ENCODE measurements at regions of chr7 and their contacts with region 1.

Region 1: GRCh38 chr7:130205084-130205947 is at the start of gene TMEM209:
- DNase-seq: peak; percentile 97

Region 2: DNA sequence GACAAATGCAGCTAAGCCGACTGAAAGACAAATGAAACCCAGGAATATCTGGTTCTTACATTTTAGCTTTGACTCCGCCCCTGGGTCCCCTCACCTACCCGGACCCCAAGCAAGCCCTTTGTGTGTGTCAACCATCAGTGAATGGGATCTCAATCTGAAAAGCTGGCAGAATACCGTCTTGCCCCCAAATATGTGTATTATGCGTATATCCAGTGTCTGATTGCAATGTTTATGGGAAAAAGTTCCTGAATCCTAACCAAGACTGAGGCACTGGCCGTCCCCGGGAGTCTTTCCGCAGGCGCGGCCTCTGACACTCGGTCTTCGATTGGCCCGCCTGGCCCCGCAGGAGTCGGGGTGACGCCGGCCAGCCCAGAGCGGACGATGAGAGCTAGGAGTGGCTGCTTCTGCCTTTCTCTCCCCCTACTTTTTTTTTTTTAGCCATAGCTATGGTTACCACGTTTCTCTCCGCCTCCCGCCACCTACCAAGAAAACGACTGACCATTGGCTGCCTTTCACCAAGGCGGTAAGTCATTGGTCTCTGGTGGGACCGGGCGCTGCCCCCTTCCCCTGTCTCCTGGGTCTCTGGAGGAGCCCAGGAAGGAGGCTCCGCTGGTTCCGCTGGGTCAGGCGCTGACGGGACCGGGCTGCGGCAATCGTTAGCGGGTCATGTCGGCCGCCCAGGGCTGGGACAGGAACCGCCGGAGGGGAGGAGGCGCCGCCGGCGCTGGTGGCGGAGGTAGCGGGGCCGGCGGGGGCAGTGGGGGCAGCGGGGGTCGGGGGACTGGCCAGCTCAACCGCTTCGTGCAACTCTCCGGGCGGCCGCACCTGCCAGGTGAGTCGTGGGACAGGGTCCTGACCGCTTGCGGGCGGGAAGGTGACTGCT is 135.1 kb before region 1 on chr7 and contains the start of gene KLHDC10:
- CTCF ChIA-PET with region 1: no interaction called
- POLR2A ChIA-PET with region 1: interaction called, 15 read pairs
- DNase-seq: peak; percentile 93

Region 3: DNA sequence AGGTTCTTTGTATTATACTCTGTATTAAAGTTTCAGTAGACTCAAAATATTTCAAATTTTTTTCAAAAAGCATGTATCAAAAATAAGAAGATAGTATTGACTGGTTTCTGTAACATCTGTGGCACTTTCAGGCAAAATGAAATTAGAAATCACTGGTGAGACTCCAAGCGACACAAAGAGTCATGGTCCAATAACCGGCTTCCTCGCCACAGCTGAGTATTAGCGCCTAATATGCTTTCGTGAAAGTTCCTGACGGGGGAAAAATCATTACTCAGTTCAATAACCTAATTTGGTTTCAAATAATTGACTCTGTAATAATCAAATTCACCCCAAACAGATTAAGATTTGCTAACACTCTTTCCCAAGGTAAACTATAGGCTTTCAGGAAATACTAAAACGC is 13.5 kb before region 1 on chr7:
- CTCF ChIA-PET with region 1: interaction called, 4 read pairs
- POLR2A ChIA-PET with region 1: interaction called, 32 read pairs
- DNase-seq: no peak

Region 4: GRCh38 chr7:130273081-130273932 is 68.0 kb after region 1 on chr7:
- CTCF ChIA-PET with region 1: no interaction called
- POLR2A ChIA-PET with region 1: interaction called, 15 read pairs
- DNase-seq: peak; percentile 78